Mammary epithelial cell (primary cell): ENCODE measurements at regions of chr18 and their contacts with region 1.

Region 1: DNA sequence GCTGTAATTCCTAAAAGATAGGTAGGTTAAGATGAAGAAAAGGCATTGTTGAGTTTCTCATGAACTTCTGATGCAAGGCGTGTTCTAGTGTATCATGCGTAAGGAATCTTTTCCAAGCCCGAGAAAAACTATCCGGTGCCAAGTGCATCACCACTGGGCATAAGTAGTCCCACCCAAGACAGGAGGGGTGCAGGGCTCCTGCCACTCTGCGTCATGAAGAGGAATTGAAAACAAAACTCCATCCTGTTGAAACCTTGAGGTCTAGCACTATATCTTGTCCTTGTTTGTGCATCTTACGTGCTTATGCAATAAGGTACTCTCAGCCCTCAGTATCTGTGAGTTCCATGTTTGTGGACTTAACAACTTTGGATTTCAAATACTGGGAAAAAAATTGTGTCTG is 45.8 kb downstream of the RAB31 start:
- DNase-seq: peak; percentile 46
- H3K4me3 ChIP-seq: no peak overlapping the region
- H3K27ac ChIP-seq: no peak overlapping the region
- H3K4me1 ChIP-seq: peaks cover 17% of the 10 kb centered on the region
- H3K27me3 ChIP-seq: no peaks in the 10 kb centered on the region
- CTCF ChIP-seq: no peak

Region 2: GRCh38 chr18:9787712-9788111 is 33.8 kb after region 1 on chr18:
- CTCF ChIA-PET with region 1: no interaction called
- dilution Hi-C with region 1: loop called (anchors 5 kb)
- in situ Hi-C with region 1: no loop called
- intact Hi-C with region 1: no loop called
- DNase-seq: no peak
- H3K4me3 ChIP-seq: no peak overlapping the region
- H3K27ac ChIP-seq: no peak overlapping the region
- H3K4me1 ChIP-seq: no peaks in the 10 kb centered on the region
- H3K27me3 ChIP-seq: no peaks in the 10 kb centered on the region
- CTCF ChIP-seq: no peak

Region 3: GRCh38 chr18:9814431-9814830 is 60.6 kb after region 1 on chr18:
- CTCF ChIA-PET with region 1: no interaction called
- dilution Hi-C with region 1: loop called (anchors 5 kb)
- in situ Hi-C with region 1: no loop called
- intact Hi-C with region 1: no loop called
- DNase-seq: peak; percentile 26
- H3K4me3 ChIP-seq: no peak overlapping the region
- H3K27ac ChIP-seq: no peak overlapping the region
- H3K4me1 ChIP-seq: peaks cover under 1% of the 10 kb centered on the region
- H3K27me3 ChIP-seq: no peaks in the 10 kb centered on the region
- CTCF ChIP-seq: no peak